ENCODE measurements at regions of chr4 and their contacts with region 1.

Region 1: GRCh38 chr4:102500696-102501446 is at the start of gene NFKB1:
- DNase-seq: peak; percentile 76
- ATAC-seq: peak; percentile 71
- H3K4me3 Mint-ChIP-seq: peak within 1 kb of the TSS; percentile 97
- H3K27ac Mint-ChIP-seq: peak within 1 kb of the TSS; percentile 95
- H3K4me1 Mint-ChIP-seq: peaks cover 31% of the 10 kb centered on the region
- H3K27me3 Mint-ChIP-seq: no peaks in the 10 kb centered on the region
- CTCF ChIP-seq: no peak
- total RNA-seq, gene NFKB1: 274 and 308 TPM in 2 replicates

Region 2: DNA sequence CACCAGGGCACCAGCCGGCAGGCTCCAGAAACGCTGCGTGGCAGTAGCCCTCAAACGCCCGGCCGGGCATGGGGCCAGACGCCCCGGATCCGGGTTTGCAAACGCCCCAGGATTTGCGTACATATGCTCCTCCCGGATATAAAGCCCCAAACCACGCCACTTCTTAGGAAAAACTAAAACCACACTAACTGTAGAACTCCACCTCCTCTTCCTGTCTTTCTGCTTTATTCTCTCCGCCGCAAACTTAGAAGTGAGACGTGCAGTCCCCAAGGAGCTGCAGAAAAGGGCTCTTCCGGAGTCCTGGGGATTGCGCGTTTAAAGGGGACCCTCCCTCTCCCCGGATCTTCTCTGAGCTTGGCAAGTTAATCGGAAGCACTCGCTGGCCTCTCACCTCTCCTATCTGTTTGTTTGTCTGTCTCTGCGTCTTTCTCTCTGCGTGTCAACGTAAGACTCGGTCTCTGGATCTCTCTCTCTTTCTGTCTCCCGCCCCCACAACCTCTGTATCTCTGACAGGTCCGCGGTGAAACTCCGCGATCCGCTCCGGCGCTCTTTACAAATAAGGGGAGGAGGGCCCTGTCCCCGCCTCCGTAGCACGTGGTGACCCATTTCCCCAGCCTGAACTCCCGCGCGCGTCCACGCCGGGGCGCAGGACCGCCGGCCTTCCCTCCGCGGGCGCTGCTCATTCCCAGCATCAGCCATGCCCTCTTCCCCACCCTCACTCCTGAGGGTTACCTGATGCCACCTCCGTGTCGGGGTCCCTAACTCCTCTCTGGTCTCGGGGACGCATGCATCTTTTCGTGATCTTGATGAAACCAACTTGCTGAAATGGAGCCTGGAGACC is 155.7 kb before region 1 on chr4 and contains the start of gene SLC39A8:
- CTCF ChIA-PET with region 1: no interaction called
- POLR2A ChIA-PET with region 1: interaction called, 3 read pairs
- intact Hi-C with region 1: loop called (anchors 1 kb)
- DNase-seq: peak; percentile 82
- ATAC-seq: peak; percentile 87
- H3K4me3 Mint-ChIP-seq: peak within 1 kb of the TSS; percentile 89
- H3K27ac Mint-ChIP-seq: peak within 1 kb of the TSS; percentile 93
- H3K4me1 Mint-ChIP-seq: peaks cover 34% of the 10 kb centered on the region
- H3K27me3 Mint-ChIP-seq: no peaks in the 10 kb centered on the region
- CTCF ChIP-seq: no peak
- total RNA-seq, gene SLC39A8: 17.9 and 18.1 TPM in 2 replicates

Region 3: DNA sequence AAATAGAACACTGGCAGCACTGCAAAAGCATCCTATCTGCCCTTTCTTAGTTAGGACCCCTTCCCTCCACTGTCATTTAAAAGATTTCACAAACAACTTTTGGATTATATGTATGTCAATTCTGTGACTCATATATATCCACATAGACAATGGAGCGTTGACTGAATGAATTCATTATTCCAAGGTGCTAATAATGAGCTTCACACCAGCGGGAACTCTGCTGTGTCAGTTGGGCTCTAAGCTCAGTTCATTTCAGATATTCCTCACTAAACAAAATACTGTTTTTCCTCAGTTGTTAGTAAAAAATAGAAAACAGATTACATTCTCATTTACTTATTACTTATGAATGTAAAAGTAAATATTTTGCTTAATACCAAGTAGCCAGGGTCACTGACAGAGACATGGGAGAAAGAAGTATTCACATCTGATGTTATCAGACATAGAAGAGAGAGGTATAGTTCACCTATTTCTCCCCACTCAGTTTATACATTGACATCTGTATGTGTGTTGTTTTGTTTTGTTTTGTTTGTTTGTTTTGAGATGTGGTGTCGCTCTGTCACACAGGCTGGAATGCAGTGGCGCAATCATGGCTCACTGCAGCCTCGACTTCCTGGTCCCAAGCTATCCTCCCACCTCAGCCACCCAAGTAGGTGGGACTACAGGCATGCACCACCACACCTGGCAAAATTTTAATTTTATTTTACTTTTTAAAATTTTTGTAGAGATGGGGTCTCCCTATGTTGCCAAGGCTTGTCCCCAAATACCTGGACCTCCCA is 11.1 kb after region 1 on chr4:
- CTCF ChIA-PET with region 1: no interaction called
- POLR2A ChIA-PET with region 1: interaction called, 6 read pairs
- intact Hi-C with region 1: loop called (anchors 1 kb)
- DNase-seq: no peak
- ATAC-seq: no peak
- H3K4me3 Mint-ChIP-seq: no peak overlapping the region
- H3K27ac Mint-ChIP-seq: no peak overlapping the region
- H3K4me1 Mint-ChIP-seq: peaks cover 66% of the 10 kb centered on the region
- H3K27me3 Mint-ChIP-seq: no peaks in the 10 kb centered on the region
- CTCF ChIP-seq: no peak

Region 4: DNA sequence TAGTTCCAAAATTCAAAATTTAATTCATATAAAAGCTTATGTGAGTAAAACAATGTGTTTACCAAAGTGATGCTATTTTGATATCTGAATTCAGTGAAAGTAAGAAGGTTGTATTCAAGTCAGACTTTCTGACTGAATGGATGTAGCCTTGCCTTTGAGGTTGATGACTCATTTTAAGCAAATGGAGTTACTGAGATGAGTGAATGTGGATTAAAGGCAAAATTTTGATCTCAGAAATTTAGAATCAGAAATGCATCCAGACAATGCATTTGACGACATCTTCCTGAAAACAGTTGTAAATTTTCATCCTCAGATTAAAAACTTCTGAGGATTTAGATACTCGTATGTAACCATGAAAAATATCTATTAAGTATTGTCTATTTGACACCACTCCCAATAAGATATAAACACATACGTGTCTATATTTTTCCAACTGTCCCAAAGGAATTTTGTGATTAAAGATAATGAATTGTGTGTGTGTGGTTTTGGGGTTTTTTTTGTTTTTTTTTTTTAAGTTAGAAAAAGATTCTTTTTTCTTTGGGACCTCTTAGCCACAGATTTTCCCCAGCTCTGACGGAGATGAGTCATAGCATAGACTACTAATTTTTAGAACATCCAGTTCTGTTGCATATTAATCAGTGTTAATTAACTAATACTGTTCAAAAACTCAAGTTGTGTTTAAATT is 34.7 kb after region 1 on chr4:
- CTCF ChIA-PET with region 1: no interaction called
- POLR2A ChIA-PET with region 1: interaction called, 25 read pairs
- intact Hi-C with region 1: loop called (anchors 5 kb)
- DNase-seq: no peak
- ATAC-seq: peak; percentile 82
- H3K4me3 Mint-ChIP-seq: peak overlapping the region; percentile 55
- H3K27ac Mint-ChIP-seq: peak overlapping the region; percentile 71
- H3K4me1 Mint-ChIP-seq: peaks cover 40% of the 10 kb centered on the region
- H3K27me3 Mint-ChIP-seq: no peaks in the 10 kb centered on the region
- CTCF ChIP-seq: no peak

Region 5: GRCh38 chr4:102760645-102761295 is 259.9 kb after region 1 on chr4 and contains the start of gene MANBA:
- CTCF ChIA-PET with region 1: no interaction called
- POLR2A ChIA-PET with region 1: interaction called, 18 read pairs
- intact Hi-C with region 1: loop called (anchors 1 kb)
- DNase-seq: peak; percentile 77
- ATAC-seq: peak; percentile 79
- H3K4me3 Mint-ChIP-seq: peak within 1 kb of the TSS; percentile 93
- H3K27ac Mint-ChIP-seq: peak within 1 kb of the TSS; percentile 96
- H3K4me1 Mint-ChIP-seq: peaks cover 51% of the 10 kb centered on the region
- H3K27me3 Mint-ChIP-seq: no peaks in the 10 kb centered on the region
- CTCF ChIP-seq: no peak
- total RNA-seq, gene MANBA: 41.2 and 55.3 TPM in 2 replicates

Region 6: GRCh38 chr4:103075901-103076739 is 575.2 kb after region 1 on chr4:
- CTCF ChIA-PET with region 1: no interaction called
- POLR2A ChIA-PET with region 1: interaction called, 3 read pairs
- intact Hi-C with region 1: loop called (anchors 2 kb)
- DNase-seq: peak; percentile 69
- ATAC-seq: peak; percentile 64
- H3K4me3 Mint-ChIP-seq: peak overlapping the region; percentile 96
- H3K27ac Mint-ChIP-seq: peak overlapping the region; percentile 99
- H3K4me1 Mint-ChIP-seq: peaks cover 45% of the 10 kb centered on the region
- H3K27me3 Mint-ChIP-seq: no peaks in the 10 kb centered on the region
- CTCF ChIP-seq: no peak

Measured in activated B cell treated with CpG ODN at 0.5 μM for 24 hours (primary cell).